ENCODE measurements at regions of chr10 and their contacts with region 1.

Region 1: GRCh38 chr10:71383972-71384687 is 12.6 kb upstream of the CDH23 start:
- DNase-seq: peak; percentile 79
- ATAC-seq: peak; percentile 99
- H3K4me3 ChIP-seq: no peak overlapping the region
- H3K4me3 Mint-ChIP-seq: no peak overlapping the region
- H3K27ac ChIP-seq: no peak overlapping the region
- H3K27ac Mint-ChIP-seq: no peak overlapping the region
- H3K4me1 ChIP-seq: peaks cover 2 to 7% of the 10 kb centered on the region in 2 donors
- H3K4me1 Mint-ChIP-seq: peaks cover 7% of the 10 kb centered on the region
- H3K27me3 ChIP-seq: peaks cover 0 to 7% (median 0%) of the 10 kb centered on the region in 4 experiments
- H3K27me3 Mint-ChIP-seq: peaks cover 7% of the 10 kb centered on the region
- CTCF ChIP-seq: peak; percentile 89

Region 2: GRCh38 chr10:71314028-71314693 is 70.0 kb before region 1 on chr10:
- CTCF ChIA-PET with region 1: interaction called, 35 read pairs
- POLR2A ChIA-PET with region 1: no interaction called
- intact Hi-C with region 1: loop called (anchors 1 kb)
- DNase-seq: peak; percentile 76
- ATAC-seq: peak; percentile 32
- H3K4me3 ChIP-seq: no peak overlapping the region
- H3K4me3 Mint-ChIP-seq: no peak overlapping the region
- H3K27ac ChIP-seq: no peak overlapping the region
- H3K27ac Mint-ChIP-seq: no peak overlapping the region
- H3K4me1 ChIP-seq: peaks cover 7 to 20% of the 10 kb centered on the region in 2 donors
- H3K4me1 Mint-ChIP-seq: peaks cover 16% of the 10 kb centered on the region
- H3K27me3 ChIP-seq: peaks cover 0 to 4% (median 0%) of the 10 kb centered on the region in 4 experiments
- H3K27me3 Mint-ChIP-seq: peaks cover 12% of the 10 kb centered on the region
- CTCF ChIP-seq: peak; percentile 97

Region 3: DNA sequence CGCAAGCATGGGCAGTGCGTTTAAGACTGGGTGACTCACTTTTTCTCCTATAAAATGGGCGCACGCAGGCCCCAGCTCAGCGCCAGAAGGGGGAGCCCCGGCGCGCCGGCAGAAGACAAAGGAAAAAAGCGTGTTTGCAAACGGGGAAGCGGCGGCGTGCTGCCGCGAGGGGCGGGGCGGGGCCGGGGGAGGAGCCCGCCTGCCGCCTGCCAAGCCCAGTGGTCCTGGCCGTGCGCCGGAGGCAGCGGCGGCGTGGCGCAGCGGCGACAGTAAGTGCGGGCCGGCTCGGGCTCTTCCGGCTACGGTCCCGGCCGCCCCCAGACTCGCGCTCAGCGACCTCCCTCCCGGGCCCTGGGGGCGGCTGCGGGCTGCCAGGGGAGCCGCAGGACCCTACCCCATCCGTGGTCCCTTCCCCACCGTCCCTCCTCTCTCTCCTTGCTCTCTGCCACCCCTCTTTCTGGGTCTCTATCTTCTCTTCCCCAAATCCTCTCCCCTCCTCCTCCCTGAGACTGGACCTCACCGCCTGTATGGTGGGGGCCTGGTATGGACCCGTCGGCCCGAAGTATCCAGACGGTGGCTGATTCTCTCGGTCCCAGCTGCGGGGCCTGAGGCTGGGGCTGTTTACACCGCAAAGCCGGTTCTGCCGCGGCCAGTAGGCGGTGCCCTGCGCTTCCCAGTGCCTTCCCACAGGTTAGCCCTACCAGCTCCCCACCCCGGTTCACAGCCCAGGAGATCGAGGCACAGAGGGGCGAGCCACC is 64.9 kb before region 1 on chr10 and contains the start of gene SLC29A3:
- CTCF ChIA-PET with region 1: interaction called, 35 read pairs
- POLR2A ChIA-PET with region 1: no interaction called
- intact Hi-C with region 1: loop called (anchors 1 kb)
- DNase-seq: peak; percentile 88
- ATAC-seq: peak; percentile 90
- H3K4me3 ChIP-seq: peak within 1 kb of the TSS; percentile 34 to 84 (median 78)
- H3K4me3 Mint-ChIP-seq: peak within 1 kb of the TSS; percentile 99
- H3K27ac ChIP-seq: peak within 1 kb of the TSS in 1 of 2 donors; percentile 72
- H3K27ac Mint-ChIP-seq: peak within 1 kb of the TSS; percentile 94
- H3K4me1 ChIP-seq: peaks cover 8 to 18% of the 10 kb centered on the region in 2 donors
- H3K4me1 Mint-ChIP-seq: peaks cover 17% of the 10 kb centered on the region
- H3K27me3 ChIP-seq: no peaks in the 10 kb centered on the region
- H3K27me3 Mint-ChIP-seq: no peaks in the 10 kb centered on the region
- CTCF ChIP-seq: peak; percentile 71
- total RNA-seq, gene SLC29A3: 6.7 and 8.2 TPM in 2 replicates

Region 4: DNA sequence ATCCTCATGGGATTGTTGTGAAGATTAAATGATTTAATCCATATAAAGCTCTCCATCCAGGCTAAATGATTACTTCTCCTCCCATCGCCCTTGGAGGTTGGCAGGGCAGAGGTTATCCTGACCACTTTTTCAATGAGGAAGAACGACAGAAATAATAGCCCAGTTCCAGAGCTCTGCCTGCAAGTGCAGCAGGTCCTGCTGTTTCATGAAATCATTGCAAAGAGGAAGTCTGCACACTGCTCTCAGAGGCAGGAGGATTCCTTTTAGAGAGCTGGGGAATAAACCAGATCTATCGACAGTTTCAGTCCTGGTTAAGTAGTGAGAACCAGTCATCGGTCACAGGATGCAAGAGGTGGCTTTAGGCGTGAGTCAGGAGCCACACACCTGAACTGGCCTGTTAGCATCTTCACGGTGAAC is 12.4 kb before region 1 on chr10:
- CTCF ChIA-PET with region 1: interaction called, 25 read pairs
- POLR2A ChIA-PET with region 1: no interaction called
- intact Hi-C with region 1: no loop called
- DNase-seq: peak; percentile 46
- ATAC-seq: peak; percentile 32
- H3K4me3 ChIP-seq: no peak overlapping the region
- H3K4me3 Mint-ChIP-seq: peak overlapping the region; percentile 57
- H3K27ac ChIP-seq: peak overlapping the region; percentile 75 to 78
- H3K27ac Mint-ChIP-seq: peak overlapping the region; percentile 91
- H3K4me1 ChIP-seq: peaks cover 35 to 46% of the 10 kb centered on the region in 2 donors
- H3K4me1 Mint-ChIP-seq: peaks cover 39% of the 10 kb centered on the region
- H3K27me3 ChIP-seq: no peaks in the 10 kb centered on the region
- H3K27me3 Mint-ChIP-seq: no peaks in the 10 kb centered on the region
- CTCF ChIP-seq: no peak

Region 5: GRCh38 chr10:71396084-71396720 is 12.1 kb after region 1 on chr10:
- CTCF ChIA-PET with region 1: interaction called, 10 read pairs
- POLR2A ChIA-PET with region 1: no interaction called
- intact Hi-C with region 1: no loop called
- DNase-seq: peak; percentile 68
- ATAC-seq: peak; percentile 66
- H3K4me3 ChIP-seq: peak overlapping the region in 4 of 5 experiments; percentile 24 to 58 (median 51)
- H3K4me3 Mint-ChIP-seq: peak overlapping the region; percentile 78
- H3K27ac ChIP-seq: no peak overlapping the region
- H3K27ac Mint-ChIP-seq: no peak overlapping the region
- H3K4me1 ChIP-seq: peaks cover 17% of the 10 kb centered on the region in 2 donors
- H3K4me1 Mint-ChIP-seq: peaks cover 11% of the 10 kb centered on the region
- H3K27me3 ChIP-seq: peaks cover 0 to 56% (median 22%) of the 10 kb centered on the region in 4 experiments
- H3K27me3 Mint-ChIP-seq: peaks cover 57% of the 10 kb centered on the region
- CTCF ChIP-seq: no peak

Region 6: DNA sequence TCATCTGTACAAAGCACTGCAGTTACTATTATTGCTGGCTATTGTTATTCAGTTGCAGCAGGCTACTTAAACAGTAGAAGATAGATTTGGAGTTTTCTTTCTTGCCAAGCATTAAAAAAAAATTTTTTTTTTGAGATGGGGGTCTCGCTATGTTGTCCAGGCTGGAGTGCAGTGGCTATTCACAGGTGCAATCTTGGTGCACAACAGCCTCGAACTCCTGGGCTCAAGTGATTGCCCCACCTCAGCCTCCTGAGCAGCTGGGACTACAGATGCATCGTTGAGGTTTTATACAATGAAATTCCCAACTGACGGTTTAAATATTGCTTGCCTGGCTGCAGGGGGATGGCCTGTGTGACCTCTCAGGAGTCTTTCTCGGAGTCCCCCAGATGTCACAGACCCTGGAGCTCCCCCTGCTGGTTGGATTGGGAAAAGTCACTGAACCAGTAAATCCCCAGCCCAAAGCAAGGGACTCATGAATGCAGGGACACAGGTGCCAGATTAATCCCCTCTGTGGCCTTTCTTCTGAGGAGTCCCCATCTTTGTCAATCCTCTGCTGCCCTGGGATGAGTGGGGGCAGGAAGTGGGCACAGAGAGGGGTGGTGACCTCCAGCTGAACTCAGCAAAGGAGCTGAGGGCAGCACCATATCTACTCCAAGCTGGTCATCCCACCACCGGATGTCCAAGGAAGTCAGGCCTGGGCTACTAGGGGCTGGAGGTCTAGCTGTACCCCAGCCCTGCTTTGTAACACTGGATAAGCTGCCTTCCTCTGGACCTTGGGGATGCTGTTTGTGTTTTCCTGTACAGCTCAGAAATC is 185.9 kb after region 1 on chr10:
- CTCF ChIA-PET with region 1: interaction called, 72 read pairs
- POLR2A ChIA-PET with region 1: no interaction called
- intact Hi-C with region 1: loop called (anchors 1 kb)
- DNase-seq: peak; percentile 77
- ATAC-seq: peak; percentile 57
- H3K4me3 ChIP-seq: no peak overlapping the region
- H3K4me3 Mint-ChIP-seq: no peak overlapping the region
- H3K27ac ChIP-seq: no peak overlapping the region
- H3K27ac Mint-ChIP-seq: no peak overlapping the region
- H3K4me1 ChIP-seq: no peaks in the 10 kb centered on the region
- H3K4me1 Mint-ChIP-seq: no peaks in the 10 kb centered on the region
- H3K27me3 ChIP-seq: no peaks in the 10 kb centered on the region
- H3K27me3 Mint-ChIP-seq: peaks cover 5% of the 10 kb centered on the region
- CTCF ChIP-seq: peak; percentile 86

Region 7: DNA sequence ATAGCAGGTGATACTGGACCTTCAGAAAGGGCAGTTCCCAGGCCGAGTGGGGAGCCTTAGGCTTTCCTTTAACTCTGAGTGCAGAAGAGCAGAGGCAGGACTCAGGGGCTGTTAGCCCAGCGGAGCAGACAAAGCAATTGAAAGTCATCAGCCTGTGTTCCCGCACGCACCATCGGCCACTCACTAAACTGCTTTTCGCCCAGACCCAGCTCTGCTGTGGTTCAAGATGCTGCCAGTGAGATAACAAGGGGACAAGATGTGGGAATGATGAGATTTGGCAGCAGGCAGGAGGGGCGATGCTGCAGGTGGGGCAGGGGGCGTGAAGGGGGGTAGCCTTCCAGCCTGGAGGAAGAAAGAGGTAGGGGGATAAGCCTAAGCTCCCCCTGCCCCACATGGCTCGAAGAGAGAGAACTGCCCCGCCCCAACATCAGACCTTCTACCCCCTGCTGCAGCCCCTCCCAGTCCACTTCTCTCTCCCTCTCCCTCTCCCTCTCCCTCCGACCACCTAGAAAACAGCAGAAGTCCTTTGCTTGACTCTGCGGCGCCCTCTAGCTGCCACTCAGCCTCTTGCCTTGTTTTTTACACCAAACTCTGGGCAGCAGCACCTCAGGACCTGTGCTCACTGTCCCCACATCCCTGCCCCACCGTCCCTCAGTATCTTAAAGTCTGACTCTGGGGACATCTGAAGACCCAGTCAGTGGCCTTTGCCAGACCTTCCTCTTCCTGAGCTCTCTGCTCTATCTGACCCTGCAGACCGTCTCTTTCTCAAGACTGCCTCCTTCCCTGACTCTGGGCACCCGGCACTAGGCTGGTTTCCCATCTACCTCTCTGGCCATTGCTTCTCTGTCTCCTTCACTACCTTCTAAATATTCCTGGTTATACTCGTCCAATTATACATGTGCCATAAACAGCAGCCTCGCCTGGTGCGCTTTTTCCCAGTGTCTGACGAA is 225.0 kb after region 1 on chr10:
- CTCF ChIA-PET with region 1: interaction called, 5 read pairs
- POLR2A ChIA-PET with region 1: no interaction called
- intact Hi-C with region 1: loop called (anchors 1 kb)
- DNase-seq: peak; percentile 75
- ATAC-seq: no peak
- H3K4me3 ChIP-seq: no peak overlapping the region
- H3K4me3 Mint-ChIP-seq: no peak overlapping the region
- H3K27ac ChIP-seq: no peak overlapping the region
- H3K27ac Mint-ChIP-seq: no peak overlapping the region
- H3K4me1 ChIP-seq: no peaks in the 10 kb centered on the region
- H3K4me1 Mint-ChIP-seq: peaks cover 2% of the 10 kb centered on the region
- H3K27me3 ChIP-seq: peaks cover 0 to 15% (median 0%) of the 10 kb centered on the region in 4 experiments
- H3K27me3 Mint-ChIP-seq: peaks cover 10% of the 10 kb centered on the region
- CTCF ChIP-seq: peak; percentile 76